ENCODE measurements at regions of chr3 and their contacts with region 1.

Region 1: DNA sequence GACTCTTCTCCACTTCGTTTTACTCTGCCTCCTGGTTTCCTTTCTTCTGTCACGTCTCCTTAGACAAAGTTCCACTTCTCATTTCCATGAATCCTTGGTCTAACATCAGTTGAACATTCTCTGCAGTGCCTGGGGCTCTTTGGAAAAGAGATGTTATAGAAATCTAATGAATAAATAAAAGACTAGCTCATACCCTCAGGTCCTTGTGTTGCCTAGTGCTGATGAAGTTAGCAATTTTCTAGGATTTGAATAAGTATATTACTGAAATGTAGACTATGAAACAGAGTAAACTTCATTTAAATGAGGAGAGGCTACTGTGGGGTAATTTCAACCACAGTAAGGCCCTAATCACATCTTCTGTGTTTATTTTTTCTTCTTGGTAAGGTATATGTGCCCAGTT is 146.9 kb upstream of the CADPS start:
- DNase-seq: no peak
- H3K4me3 ChIP-seq: no peak overlapping the region
- H3K27ac ChIP-seq: no peak overlapping the region
- H3K4me1 ChIP-seq: no peaks in the 10 kb centered on the region
- H3K27me3 ChIP-seq: no peaks in the 10 kb centered on the region
- CTCF ChIP-seq: no peak

Region 2: DNA sequence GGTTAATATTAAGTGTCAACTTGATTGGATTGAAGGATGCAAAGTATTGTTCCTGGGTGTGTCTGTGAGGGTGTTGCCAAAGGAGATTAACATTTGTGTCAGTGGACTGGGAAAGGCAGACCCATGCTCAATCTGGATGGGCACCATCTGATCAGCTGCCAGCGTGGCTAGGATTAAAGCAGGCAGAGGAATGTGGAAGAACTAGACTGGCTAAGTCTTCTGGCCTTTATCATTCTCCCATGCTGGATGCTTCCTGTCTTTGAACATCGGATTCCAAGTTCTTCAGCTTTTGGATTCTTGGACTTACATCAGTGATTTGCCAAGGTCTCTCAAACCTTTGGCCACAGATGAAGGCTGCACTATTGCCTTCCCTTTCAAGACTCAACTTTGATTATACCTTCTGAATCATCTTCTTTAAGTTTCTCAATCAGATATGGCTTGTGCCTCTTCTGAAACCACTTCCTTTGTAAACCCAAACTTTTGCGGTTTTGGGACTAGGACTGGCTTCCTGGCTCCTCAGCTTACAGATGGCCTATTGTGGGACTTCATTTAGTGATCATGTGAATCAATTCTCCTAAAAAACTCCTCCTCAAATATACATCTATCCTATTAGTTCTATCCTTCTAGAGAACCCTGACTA is 99.9 kb before region 1 on chr3:
- CTCF ChIA-PET with region 1: no interaction called
- POLR2A ChIA-PET with region 1: interaction called, 33 read pairs
- intact Hi-C with region 1: no loop called
- DNase-seq: no peak
- H3K4me3 ChIP-seq: no peak overlapping the region
- H3K27ac ChIP-seq: no peak overlapping the region
- H3K4me1 ChIP-seq: no peaks in the 10 kb centered on the region
- H3K27me3 ChIP-seq: no peaks in the 10 kb centered on the region
- CTCF ChIP-seq: no peak

Measured in PC-9 (cell line).